ENCODE measurements at regions of chrX and their contacts with region 1.

Region 1: DNA sequence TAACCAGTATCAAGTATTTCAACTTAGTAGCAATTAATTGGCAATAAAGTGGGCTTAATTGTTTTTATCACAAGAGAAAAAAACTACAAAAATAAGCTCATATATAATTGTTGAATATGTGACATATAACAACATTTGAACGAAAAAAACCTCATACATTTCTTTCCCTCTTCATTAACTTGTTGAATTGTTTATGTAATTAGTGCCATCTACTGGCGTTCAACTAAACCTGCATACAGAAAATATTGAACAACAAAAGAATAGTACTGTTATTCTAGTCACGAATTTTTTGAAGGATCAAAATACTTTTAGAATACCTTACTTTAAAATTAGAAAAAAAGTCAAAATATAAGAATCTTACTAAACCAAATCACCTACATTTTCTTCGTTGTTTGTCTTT is 586.5 kb upstream of the FTHL17 start:
- DNase-seq: no peak
- ATAC-seq: no peak
- H3K4me3 ChIP-seq: no peak overlapping the region
- H3K27ac ChIP-seq: no peak overlapping the region
- H3K4me1 ChIP-seq: no peaks in the 10 kb centered on the region
- H3K27me3 ChIP-seq: no peaks in the 10 kb centered on the region
- CTCF ChIP-seq: peak in 4 of 5 experiments; percentile 10 to 49 (median 34)
- POLR2A ChIP-seq: no peak

Region 2: DNA sequence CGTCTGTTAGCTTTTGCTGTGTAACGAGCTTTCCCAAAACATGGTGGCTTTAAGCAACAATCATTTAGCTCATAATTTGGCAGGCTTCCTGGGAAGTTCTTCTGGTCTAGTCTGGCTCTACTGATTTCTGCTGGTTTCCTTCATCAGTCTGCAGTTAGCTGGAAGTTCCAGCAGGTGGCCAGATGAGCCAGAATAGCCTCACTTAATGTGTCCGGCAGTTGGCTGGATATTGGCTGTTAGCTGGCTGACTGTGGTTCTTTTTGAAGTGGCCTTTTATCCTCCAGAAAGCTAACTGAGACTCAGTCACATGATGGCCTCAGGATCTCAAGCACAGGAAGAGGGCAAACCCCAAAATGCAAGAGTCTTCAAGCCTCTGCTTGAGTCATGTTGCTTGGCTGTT is 621.5 kb before region 1 on chrX:
- in situ Hi-C with region 1: loop called (anchors 10 to 25 kb)
- intact Hi-C with region 1: loop called (anchors 5 kb)
- DNase-seq: peak in 1 of 2 donors; percentile 7
- ATAC-seq: no peak
- H3K4me3 ChIP-seq: no peak overlapping the region
- H3K27ac ChIP-seq: no peak overlapping the region
- H3K4me1 ChIP-seq: no peaks in the 10 kb centered on the region
- H3K27me3 ChIP-seq: no peaks in the 10 kb centered on the region
- CTCF ChIP-seq: peak in 4 of 5 experiments; percentile 19 to 51 (median 41)
- POLR2A ChIP-seq: no peak

Region 3: GRCh38 chrX:31213941-31214340 is 444.4 kb before region 1 on chrX:
- in situ Hi-C with region 1: loop called in 3 of 4 experiments (anchors 10 to 25 kb)
- intact Hi-C with region 1: loop called (anchors 5 kb)
- DNase-seq: no peak
- ATAC-seq: no peak
- H3K4me3 ChIP-seq: no peak overlapping the region
- H3K27ac ChIP-seq: no peak overlapping the region
- H3K4me1 ChIP-seq: peaks cover 0 to 5% of the 10 kb centered on the region in 2 donors
- H3K27me3 ChIP-seq: no peaks in the 10 kb centered on the region
- CTCF ChIP-seq: peak in 2 of 5 experiments; percentile 31 to 44
- POLR2A ChIP-seq: no peak